ENCODE measurements at regions of chr18 and their contacts with region 1.

Region 1: DNA sequence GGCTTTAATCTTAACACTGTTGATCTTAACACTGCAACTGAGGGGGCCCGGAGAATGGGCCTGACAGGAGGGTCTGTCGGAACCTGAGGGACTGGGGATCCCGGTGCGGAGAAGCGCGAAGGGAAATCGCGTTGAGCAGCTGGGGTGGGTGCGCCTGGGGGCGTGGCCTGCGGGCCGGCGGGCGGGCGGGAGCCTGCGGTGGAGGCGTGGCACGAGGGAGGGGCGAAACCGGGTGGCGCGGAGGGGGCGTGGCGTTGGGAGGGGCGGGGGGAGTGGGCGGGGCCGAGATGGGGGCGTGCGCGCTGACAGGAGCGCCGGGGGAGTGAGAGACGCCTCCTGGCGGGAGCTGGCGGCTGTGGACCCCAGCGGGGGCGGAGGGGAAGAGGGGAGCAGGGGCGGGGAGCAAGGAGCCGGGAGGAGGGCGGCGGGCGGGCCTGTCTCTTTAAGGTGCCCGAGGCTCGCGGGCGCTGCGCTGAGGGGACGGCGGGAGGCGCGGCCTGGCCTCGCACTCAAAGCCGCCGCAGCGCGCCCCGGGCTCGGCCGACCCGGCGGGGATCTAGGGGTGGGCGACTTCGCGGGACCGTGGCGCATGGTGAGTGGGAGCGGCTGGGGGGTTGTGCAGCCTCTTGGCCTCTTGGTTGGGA is at the start of gene TWSG1:
- DNase-seq: peak; percentile 75 to 97
- H3K4me3 ChIP-seq: peak within 1 kb of the TSS; percentile 100
- H3K27ac ChIP-seq: no peak within 1 kb of the TSS
- H3K4me1 ChIP-seq: peaks cover 23% of the 10 kb centered on the region
- H3K27me3 ChIP-seq: no peaks in the 10 kb centered on the region
- CTCF ChIP-seq: peak; percentile 37
- total RNA-seq, gene TWSG1: 52.1 and 55.8 TPM in 2 replicates

Region 2: GRCh38 chr18:7789856-7790552 is 1544.4 kb before region 1 on chr18:
- CTCF ChIA-PET with region 1: no interaction called
- POLR2A ChIA-PET with region 1: no interaction called
- intact Hi-C with region 1: no loop called
- DNase-seq: peak in 1 of 2 experiments; percentile 25
- H3K4me3 ChIP-seq: no peak overlapping the region
- H3K27ac ChIP-seq: no peak overlapping the region
- H3K4me1 ChIP-seq: no peaks in the 10 kb centered on the region
- H3K27me3 ChIP-seq: no peaks in the 10 kb centered on the region
- CTCF ChIP-seq: peak; percentile 82

Region 3: DNA sequence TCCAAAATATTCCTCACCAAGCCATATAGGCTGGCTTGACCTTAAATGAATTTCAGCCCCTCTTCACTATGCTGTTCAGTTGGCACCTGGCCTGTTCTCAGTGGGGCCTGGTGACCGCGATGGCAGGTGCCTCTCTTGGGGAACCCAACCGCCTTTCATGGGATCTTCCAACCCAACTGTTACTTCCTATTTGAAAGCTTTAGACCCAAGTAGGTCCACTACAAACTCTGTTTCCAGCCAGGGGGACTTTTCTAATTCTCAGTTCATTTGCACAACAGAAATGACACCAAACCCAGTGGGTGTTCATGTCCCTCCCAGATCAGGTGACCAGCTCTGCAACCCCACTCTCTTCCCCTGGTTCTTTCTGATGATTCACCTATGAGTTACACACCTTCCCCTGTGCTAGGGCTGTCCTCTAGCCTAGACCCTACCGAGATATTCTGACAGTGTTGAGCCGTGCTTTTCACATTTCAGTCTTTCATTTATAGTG is 267.6 kb before region 1 on chr18:
- CTCF ChIA-PET with region 1: no interaction called
- POLR2A ChIA-PET with region 1: no interaction called
- intact Hi-C with region 1: loop called (anchors 5 kb)
- DNase-seq: no peak
- H3K4me3 ChIP-seq: no peak overlapping the region
- H3K27ac ChIP-seq: no peak overlapping the region
- H3K4me1 ChIP-seq: peaks cover 40% of the 10 kb centered on the region
- H3K27me3 ChIP-seq: no peaks in the 10 kb centered on the region
- CTCF ChIP-seq: no peak

Region 4: DNA sequence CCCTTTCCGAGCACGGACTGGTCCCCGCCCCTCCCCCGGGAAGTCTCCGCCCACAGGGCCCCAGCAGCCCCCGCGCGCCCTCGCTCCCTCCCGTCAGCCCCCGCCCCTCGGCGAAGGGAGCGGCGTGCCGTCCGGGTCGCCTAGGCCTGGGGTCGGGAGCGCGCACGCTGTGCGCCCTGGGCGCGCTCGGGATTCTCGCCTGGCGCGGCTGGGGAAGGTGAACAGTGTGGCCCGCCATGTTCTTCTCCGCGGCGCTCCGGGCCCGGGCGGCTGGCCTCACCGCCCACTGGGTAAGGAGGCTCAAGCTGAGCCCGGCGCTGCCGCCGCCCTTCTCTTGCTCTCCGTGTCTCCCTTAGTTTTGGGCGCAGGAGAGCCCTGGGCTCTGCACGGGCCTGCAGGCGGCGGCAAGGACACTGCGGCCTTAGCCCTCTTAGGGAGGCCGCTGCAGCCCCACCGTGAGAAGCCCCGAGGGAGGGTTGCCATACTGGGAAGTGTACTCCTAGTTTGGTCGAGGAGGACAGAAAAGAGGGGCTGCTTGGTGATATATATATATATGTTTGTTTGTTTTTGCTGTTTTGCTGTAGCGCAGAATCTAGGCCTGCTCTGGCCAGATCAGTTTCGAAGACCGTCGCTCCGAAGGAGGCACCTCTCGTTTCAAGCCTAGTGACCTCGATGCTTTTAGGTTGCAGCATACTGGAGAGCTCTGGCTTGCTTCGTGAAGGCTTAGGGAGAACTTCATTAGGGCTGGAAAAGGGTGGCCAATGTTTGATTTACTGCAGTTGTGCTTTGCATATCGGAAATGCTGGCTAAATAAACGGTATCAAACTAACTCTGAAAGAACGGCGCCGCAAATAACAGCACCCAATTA is 231.7 kb before region 1 on chr18 and contains the start of gene NDUFV2:
- CTCF ChIA-PET with region 1: interaction called, 4 read pairs
- POLR2A ChIA-PET with region 1: no interaction called
- intact Hi-C with region 1: loop called (anchors 1 kb)
- DNase-seq: peak; percentile 81 to 99
- H3K4me3 ChIP-seq: peak within 1 kb of the TSS; percentile 100
- H3K27ac ChIP-seq: peak within 1 kb of the TSS; percentile 86
- H3K4me1 ChIP-seq: peaks cover 40% of the 10 kb centered on the region
- H3K27me3 ChIP-seq: no peaks in the 10 kb centered on the region
- CTCF ChIP-seq: no peak
- total RNA-seq, gene NDUFV2: 182 and 215 TPM in 2 replicates

Region 5: GRCh38 chr18:9417073-9417841 is 82.8 kb after region 1 on chr18:
- CTCF ChIA-PET with region 1: no interaction called
- POLR2A ChIA-PET with region 1: interaction called, 26 read pairs
- intact Hi-C with region 1: loop called (anchors 10 kb)
- DNase-seq: peak in 1 of 2 experiments; percentile 92
- H3K4me3 ChIP-seq: no peak overlapping the region
- H3K27ac ChIP-seq: no peak overlapping the region
- H3K4me1 ChIP-seq: peaks cover 9% of the 10 kb centered on the region
- H3K27me3 ChIP-seq: no peaks in the 10 kb centered on the region
- CTCF ChIP-seq: no peak

Region 6: GRCh38 chr18:9474983-9475642 is 140.7 kb after region 1 on chr18 and contains the start of gene RALBP1:
- CTCF ChIA-PET with region 1: interaction called, 22 read pairs
- POLR2A ChIA-PET with region 1: no interaction called
- intact Hi-C with region 1: loop called (anchors 1 kb)
- DNase-seq: peak; percentile 96 to 100
- H3K4me3 ChIP-seq: peak within 1 kb of the TSS; percentile 68
- H3K27ac ChIP-seq: peak within 1 kb of the TSS; percentile 94
- H3K4me1 ChIP-seq: peaks cover 23% of the 10 kb centered on the region
- H3K27me3 ChIP-seq: no peaks in the 10 kb centered on the region
- CTCF ChIP-seq: no peak; the same call in 1 of the 2 replicates
- total RNA-seq, gene RALBP1: 91.3 and 95.0 TPM in 2 replicates

Region 7: DNA sequence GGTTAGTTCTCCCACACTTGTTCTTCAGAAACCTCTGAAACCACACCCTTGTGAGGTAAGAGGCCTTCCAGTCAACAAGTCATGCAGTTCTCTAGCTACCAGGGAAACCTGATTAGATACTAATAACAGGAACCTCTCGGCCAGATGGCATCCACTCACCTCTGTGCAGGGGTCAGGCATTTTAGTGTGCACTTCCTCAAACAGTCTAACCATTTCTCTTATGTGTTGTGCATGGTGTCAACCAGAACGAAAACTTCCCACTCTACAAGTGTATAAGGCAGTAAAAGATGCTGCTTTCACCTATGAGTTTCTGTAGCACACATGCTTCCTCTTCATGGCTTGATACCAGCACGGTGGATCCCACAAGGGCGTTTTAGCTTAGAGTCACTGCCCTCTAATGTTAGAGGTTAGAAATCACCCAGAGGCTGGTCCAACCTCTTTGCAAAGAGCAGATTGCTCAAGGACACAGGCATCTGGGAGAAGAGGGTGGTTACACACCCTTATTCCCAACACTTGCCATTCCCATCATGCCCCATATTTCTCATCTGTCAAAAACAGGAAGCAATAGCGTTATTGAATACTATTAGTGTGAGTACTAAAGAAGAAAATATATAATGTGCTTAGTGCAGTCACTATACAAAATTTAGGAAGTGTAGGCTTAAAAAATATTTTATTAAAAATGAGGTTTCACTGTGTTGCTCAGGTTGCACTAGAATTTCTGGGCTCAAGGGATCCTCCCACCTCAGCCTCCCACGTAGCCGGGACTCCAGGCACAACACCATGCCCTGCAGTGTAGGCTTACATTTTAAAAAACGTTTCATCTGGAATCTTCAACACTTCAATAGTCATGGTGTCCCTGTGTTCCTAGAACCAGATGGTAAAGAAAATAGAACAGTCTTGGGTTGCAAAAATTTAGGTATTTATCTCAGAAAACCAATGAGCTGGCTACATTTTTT is 339.1 kb after region 1 on chr18:
- CTCF ChIA-PET with region 1: no interaction called
- POLR2A ChIA-PET with region 1: no interaction called
- intact Hi-C with region 1: loop called (anchors 10 kb)
- DNase-seq: peak; percentile 84 to 100
- H3K4me3 ChIP-seq: peak overlapping the region; percentile 36; the same call in 1 of the 2 replicates
- H3K27ac ChIP-seq: peak overlapping the region; percentile 92
- H3K4me1 ChIP-seq: peaks cover 34% of the 10 kb centered on the region
- H3K27me3 ChIP-seq: no peaks in the 10 kb centered on the region
- CTCF ChIP-seq: peak; percentile 61